ENCODE measurements at regions of chr3 and their contacts with region 1.

Region 1: DNA sequence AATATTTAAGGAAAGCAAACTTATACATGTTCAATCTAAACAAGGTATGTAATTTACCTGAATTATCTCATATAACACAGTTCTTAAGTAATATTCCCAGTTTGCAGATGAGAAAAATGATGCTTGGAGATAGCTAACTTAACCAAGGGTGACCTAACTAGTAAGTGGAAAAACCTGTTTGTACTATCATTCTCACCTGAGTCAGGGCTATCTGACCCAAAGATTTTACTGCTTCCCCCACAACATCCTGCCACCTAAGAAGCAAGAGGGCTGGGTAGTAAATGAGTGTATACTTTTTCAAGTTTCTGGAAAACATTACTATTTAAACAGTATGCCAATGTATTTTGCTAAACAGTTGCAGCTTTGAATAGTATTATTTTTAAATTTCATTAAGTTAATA is 10.6 kb downstream of the TP63 start:
- DNase-seq: no peak
- H3K4me3 Mint-ChIP-seq: no peak overlapping the region
- H3K27ac Mint-ChIP-seq: no peak overlapping the region
- H3K4me1 Mint-ChIP-seq: no peaks in the 10 kb centered on the region
- H3K27me3 Mint-ChIP-seq: no peaks in the 10 kb centered on the region
- CTCF ChIP-seq: no peak

Region 2: GRCh38 chr3:189630767-189631372 is 10.9 kb before region 1 on chr3:
- CTCF ChIA-PET with region 1: no interaction called
- POLR2A ChIA-PET with region 1: interaction called, 10 read pairs
- intact Hi-C with region 1: no loop called
- DNase-seq: no peak
- H3K4me3 Mint-ChIP-seq: no peak overlapping the region
- H3K27ac Mint-ChIP-seq: no peak overlapping the region
- H3K4me1 Mint-ChIP-seq: peaks cover 9% of the 10 kb centered on the region
- H3K27me3 Mint-ChIP-seq: no peaks in the 10 kb centered on the region
- CTCF ChIP-seq: no peak